GM12878 (cell line): ENCODE measurements at regions of chr16 and their contacts with region 1.

Region 1: GRCh38 chr16:19555162-19555937 is at the start of gene VPS35L:
- DNase-seq: peak; percentile 94
- ATAC-seq: peak; percentile 98
- H3K4me3 ChIP-seq: peak within 1 kb of the TSS; percentile 89
- H3K27ac ChIP-seq: peak within 1 kb of the TSS; percentile 86
- H3K4me1 ChIP-seq: peaks cover 3% of the 10 kb centered on the region
- H3K27me3 ChIP-seq: no peaks in the 10 kb centered on the region
- CTCF ChIP-seq: peak; percentile 79 to 86 (median 86)
- EP300 ChIP-seq: no peak
- POLR2A ChIP-seq: peak; percentile 87
- RAD21 ChIP-seq: no peak
- polyA plus RNA-seq, gene VPS35L: 15.2 to 20.2 TPM

Region 2: DNA sequence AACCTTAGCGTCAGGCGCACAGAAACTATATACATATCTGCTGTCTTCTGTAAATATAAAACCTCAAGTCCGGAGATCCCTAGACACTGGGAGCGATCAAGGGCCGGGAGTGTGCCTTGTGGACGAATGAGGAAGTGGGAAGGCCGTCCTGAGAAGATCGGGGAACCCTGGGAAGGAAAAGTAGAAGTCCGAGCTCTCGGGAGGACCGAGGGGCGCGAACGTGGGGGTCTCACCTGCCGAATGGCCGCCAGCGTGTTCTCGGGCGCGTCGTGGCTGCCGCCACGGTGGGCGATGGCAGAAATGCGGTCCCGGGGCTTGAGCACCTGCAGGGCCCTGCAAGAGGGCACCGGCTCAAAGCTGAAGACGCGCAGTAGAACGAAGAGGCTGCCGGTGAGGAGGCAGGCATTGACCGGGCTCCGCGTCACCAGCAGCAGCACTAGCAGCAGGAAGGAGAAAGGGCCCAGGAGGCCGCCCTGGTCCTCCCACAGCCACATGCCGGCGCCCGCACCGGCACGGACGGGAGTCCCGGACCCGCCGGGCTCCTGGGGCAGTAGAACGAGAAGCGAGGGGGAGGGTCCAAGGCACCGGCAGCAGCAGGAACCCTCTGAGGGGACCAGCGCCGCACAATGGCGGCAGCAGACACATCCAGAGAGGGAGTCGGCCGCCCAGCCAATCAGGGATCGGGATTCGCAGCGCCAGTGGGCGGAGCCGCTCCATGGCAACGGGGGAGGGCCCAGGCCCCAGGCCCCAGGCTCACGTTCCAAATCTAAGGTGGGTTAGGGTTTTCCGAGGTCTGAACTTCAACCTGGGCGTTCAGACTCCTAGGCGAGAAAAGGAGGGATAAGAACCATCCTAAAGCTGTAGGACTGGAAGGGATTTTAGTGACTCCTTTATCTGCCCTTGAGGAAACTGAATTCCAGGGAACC is 33.6 kb before region 1 on chr16 and contains the start of gene GDE1:
- CTCF ChIA-PET with region 1: interaction called, 56 read pairs
- POLR2A ChIA-PET with region 1: interaction called, 23 read pairs
- RAD21 ChIA-PET with region 1: interaction called, 24 read pairs
- SMC1A ChIA-PET with region 1: interaction called, 19 read pairs
- in situ Hi-C with region 1: no loop called
- intact Hi-C with region 1: loop called (anchors 2 kb)
- DNase-seq: peak; percentile 64
- ATAC-seq: peak; percentile 77
- H3K4me3 ChIP-seq: peak within 1 kb of the TSS; percentile 81
- H3K27ac ChIP-seq: peak within 1 kb of the TSS; percentile 74
- H3K4me1 ChIP-seq: peaks cover 14% of the 10 kb centered on the region
- H3K27me3 ChIP-seq: no peaks in the 10 kb centered on the region
- CTCF ChIP-seq: peak; percentile 39 to 61 (median 50); a peak in 5 of 6 replicates
- EP300 ChIP-seq: no peak
- POLR2A ChIP-seq: peak; percentile 89
- RAD21 ChIP-seq: no peak
- polyA plus RNA-seq, gene GDE1: 14.8 to 17.3 TPM

Region 3: DNA sequence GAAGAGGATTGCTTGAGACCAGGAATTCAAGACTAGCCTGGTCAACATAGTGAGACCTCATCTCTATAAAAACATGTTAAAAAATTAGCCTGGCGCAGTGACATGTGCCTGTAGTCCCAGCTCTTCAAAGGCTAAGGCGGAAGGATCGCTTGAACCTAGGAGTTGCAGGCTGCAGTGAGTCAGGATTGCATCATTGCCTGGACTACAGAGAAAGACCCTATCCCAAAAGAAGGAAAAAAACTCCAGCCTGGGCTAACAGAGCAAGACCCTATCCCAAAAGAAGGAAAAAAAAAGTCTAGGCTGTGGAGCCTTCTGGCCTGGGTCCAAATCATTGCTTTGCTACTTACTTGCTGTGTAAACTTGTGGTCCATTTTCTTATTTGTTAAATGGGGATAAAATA is 26.7 kb before region 1 on chr16:
- CTCF ChIA-PET with region 1: interaction called, 56 read pairs
- POLR2A ChIA-PET with region 1: interaction called, 23 read pairs
- RAD21 ChIA-PET with region 1: interaction called, 24 read pairs
- SMC1A ChIA-PET with region 1: interaction called, 19 read pairs
- in situ Hi-C with region 1: no loop called
- intact Hi-C with region 1: loop called (anchors 2 kb)
- DNase-seq: no peak
- ATAC-seq: no peak
- H3K4me3 ChIP-seq: no peak overlapping the region
- H3K27ac ChIP-seq: no peak overlapping the region
- H3K4me1 ChIP-seq: no peaks in the 10 kb centered on the region
- H3K27me3 ChIP-seq: no peaks in the 10 kb centered on the region
- CTCF ChIP-seq: no peak
- EP300 ChIP-seq: no peak
- POLR2A ChIP-seq: no peak
- RAD21 ChIP-seq: no peak

Region 4: DNA sequence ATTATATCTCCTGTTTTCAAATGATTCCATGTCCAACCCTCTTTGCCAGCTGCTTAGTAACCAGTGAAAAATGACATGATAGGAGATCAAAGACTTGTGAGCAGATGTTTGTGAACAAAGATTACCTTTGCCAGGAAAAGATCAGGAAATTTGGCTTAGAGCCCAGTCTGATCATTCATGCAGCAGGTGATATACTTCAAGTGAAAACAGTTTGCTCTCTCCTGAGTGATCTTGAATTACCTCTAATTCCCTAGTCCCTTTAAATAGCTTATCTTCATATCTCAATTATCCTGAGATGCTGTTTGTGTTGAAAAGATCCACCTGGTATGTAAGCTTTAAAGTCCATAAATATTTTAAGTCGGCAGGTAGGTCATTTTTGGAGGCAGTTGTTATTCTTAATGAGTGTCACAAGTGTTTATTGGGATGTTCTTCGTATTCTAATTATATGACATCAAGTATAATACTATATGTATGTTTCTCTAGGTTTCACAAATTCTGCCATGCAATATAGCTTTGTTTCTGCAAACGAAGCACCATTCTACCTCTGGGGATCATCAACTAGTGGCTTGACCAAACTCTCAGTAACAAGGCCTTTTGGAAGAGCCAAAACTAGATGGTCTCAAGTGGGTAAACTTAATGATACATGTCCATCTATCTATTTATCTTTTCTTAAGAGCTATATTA is 13.1 kb before region 1 on chr16:
- CTCF ChIA-PET with region 1: interaction called, 51 read pairs
- POLR2A ChIA-PET with region 1: interaction called, 5 read pairs
- RAD21 ChIA-PET with region 1: no interaction called
- SMC1A ChIA-PET with region 1: interaction called, 6 read pairs
- in situ Hi-C with region 1: no loop called
- intact Hi-C with region 1: no loop called
- DNase-seq: no peak
- ATAC-seq: no peak
- H3K4me3 ChIP-seq: no peak overlapping the region
- H3K27ac ChIP-seq: no peak overlapping the region
- H3K4me1 ChIP-seq: no peaks in the 10 kb centered on the region
- H3K27me3 ChIP-seq: no peaks in the 10 kb centered on the region
- CTCF ChIP-seq: no peak
- EP300 ChIP-seq: no peak
- POLR2A ChIP-seq: no peak
- RAD21 ChIP-seq: no peak